ENCODE measurements at regions of chr1 and their contacts with region 1.

Region 1: GRCh38 chr1:208652296-208653160 is 408.3 kb upstream of the PLXNA2 start:
- DNase-seq: peak; percentile 66
- ATAC-seq: peak; percentile 96
- H3K4me3 ChIP-seq: no peak overlapping the region
- H3K27ac ChIP-seq: no peak overlapping the region
- H3K4me1 ChIP-seq: no peaks in the 10 kb centered on the region
- H3K27me3 ChIP-seq: no peaks in the 10 kb centered on the region
- CTCF ChIP-seq: peak; percentile 73
- POLR2A ChIP-seq: no peak
- RAD21 ChIP-seq: peak; percentile 35; the same call in 1 of the 2 replicates

Region 2: DNA sequence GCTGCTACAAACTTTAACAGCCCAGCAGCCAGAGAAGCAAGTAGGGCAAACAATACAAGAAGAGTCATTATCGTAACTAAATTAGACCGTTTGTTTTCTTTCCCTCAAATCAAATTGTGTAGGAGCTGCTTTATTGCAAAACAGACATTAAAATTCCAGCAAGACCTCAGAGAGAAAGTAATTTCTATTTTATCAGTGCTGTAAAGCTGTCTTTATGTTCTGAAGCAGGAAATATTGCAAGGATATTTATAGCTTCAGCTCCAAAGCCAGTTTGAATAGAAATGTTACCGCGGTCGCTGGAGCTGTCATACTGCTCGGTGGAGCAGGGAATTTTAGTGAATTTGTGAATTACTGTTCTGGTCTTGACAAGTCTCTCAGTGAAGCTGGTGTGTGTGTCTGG is 95.5 kb after region 1 on chr1:
- CTCF ChIA-PET with region 1: no interaction called
- POLR2A ChIA-PET with region 1: no interaction called
- dilution Hi-C with region 1: no loop called
- in situ Hi-C with region 1: no loop called
- intact Hi-C with region 1: no loop called
- DNase-seq: no peak
- ATAC-seq: no peak
- H3K4me3 ChIP-seq: no peak overlapping the region
- H3K27ac ChIP-seq: no peak overlapping the region
- H3K4me1 ChIP-seq: no peaks in the 10 kb centered on the region
- H3K27me3 ChIP-seq: no peaks in the 10 kb centered on the region
- CTCF ChIP-seq: no peak
- POLR2A ChIP-seq: no peak
- RAD21 ChIP-seq: no peak

Region 3: GRCh38 chr1:209513226-209513625 is 860.7 kb after region 1 on chr1:
- CTCF ChIA-PET with region 1: interaction called, 5 read pairs
- POLR2A ChIA-PET with region 1: no interaction called
- dilution Hi-C with region 1: no loop called
- in situ Hi-C with region 1: no loop called
- intact Hi-C with region 1: loop called (anchors 2 kb)
- DNase-seq: peak; percentile 46
- ATAC-seq: peak; percentile 77
- H3K4me3 ChIP-seq: no peak overlapping the region
- H3K27ac ChIP-seq: no peak overlapping the region
- H3K4me1 ChIP-seq: no peaks in the 10 kb centered on the region
- H3K27me3 ChIP-seq: peaks cover 2% of the 10 kb centered on the region; the same call in 1 of the 2 replicates
- CTCF ChIP-seq: peak; percentile 56
- POLR2A ChIP-seq: no peak
- RAD21 ChIP-seq: peak; percentile 78

Measured in IMR-90 (cell line).